Ascending aorta (tissue), 2 donors: ENCODE measurements at regions of chr11 and their contacts with region 1.

Region 1: DNA sequence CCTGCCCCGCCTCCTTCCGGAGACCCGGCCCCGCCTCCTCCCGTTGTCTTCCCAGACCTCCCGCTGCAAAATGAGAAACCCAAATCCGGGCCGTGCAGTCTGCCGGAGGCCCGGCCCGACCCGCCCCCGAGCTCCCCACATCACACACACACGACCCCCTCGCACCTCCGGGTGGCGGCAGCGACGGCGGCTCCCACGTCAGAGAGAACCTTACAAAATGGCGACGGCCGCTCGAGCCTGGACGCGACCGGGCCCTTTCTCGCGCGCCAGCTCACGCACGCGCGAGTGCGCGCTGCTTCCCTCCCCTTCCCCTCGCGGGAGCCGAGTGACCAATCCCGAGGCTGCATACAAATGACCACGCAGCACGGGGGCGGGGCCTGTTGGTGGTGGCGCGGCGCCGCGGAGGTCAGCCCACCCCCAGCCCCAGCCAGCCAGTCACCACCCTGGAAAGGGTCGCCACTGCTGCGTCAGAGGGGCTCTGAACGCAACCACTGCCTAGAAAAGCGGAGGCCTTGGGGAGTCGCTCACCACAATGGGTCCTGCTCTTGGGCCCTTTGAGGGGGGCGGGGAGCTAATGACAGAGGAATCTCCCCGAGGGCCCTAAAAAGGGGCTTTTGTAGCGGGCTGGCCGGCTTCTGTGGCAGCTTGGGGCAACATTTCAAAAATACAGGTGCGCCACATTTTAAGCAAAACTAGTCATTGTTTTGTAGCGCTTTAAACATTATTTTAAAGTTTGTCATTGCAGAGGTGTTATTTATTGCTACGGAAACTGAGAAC is at the start of gene RBM4B:
- DNase-seq: peak; percentile 89 to 99
- H3K4me3 ChIP-seq: peak within 1 kb of the TSS; percentile 79 to 87
- H3K27ac ChIP-seq: peak within 1 kb of the TSS; percentile 94 to 97
- H3K4me1 ChIP-seq: peaks cover 0 to 29% of the 10 kb centered on the region in 2 donors
- H3K27me3 ChIP-seq: no peaks in the 10 kb centered on the region
- CTCF ChIP-seq: no peak
- total RNA-seq, gene RBM4B: 87.0 TPM

Region 2: GRCh38 chr11:66408488-66409214 is 269.1 kb before region 1 on chr11:
- intact Hi-C with region 1: loop called (anchors 2 kb)
- DNase-seq: peak; percentile 81 to 95
- H3K4me3 ChIP-seq: peak overlapping the region; percentile 47 to 67
- H3K27ac ChIP-seq: peak overlapping the region; percentile 73
- H3K4me1 ChIP-seq: peaks cover 11 to 21% of the 10 kb centered on the region in 2 donors
- H3K27me3 ChIP-seq: no peaks in the 10 kb centered on the region
- CTCF ChIP-seq: peak; percentile 99 to 100 (median 100)

Region 3: GRCh38 chr11:66545701-66546367 is 132.0 kb before region 1 on chr11 and contains the start of gene ZDHHC24:
- intact Hi-C with region 1: loop called (anchors 1 kb)
- DNase-seq: peak; percentile 87 to 98
- H3K4me3 ChIP-seq: peak within 1 kb of the TSS; percentile 80 to 92
- H3K27ac ChIP-seq: peak within 1 kb of the TSS; percentile 64
- H3K4me1 ChIP-seq: peaks cover 3 to 20% of the 10 kb centered on the region in 2 donors
- H3K27me3 ChIP-seq: no peaks in the 10 kb centered on the region
- CTCF ChIP-seq: no peak
- total RNA-seq, gene ZDHHC24: 18.0 TPM

Region 4: DNA sequence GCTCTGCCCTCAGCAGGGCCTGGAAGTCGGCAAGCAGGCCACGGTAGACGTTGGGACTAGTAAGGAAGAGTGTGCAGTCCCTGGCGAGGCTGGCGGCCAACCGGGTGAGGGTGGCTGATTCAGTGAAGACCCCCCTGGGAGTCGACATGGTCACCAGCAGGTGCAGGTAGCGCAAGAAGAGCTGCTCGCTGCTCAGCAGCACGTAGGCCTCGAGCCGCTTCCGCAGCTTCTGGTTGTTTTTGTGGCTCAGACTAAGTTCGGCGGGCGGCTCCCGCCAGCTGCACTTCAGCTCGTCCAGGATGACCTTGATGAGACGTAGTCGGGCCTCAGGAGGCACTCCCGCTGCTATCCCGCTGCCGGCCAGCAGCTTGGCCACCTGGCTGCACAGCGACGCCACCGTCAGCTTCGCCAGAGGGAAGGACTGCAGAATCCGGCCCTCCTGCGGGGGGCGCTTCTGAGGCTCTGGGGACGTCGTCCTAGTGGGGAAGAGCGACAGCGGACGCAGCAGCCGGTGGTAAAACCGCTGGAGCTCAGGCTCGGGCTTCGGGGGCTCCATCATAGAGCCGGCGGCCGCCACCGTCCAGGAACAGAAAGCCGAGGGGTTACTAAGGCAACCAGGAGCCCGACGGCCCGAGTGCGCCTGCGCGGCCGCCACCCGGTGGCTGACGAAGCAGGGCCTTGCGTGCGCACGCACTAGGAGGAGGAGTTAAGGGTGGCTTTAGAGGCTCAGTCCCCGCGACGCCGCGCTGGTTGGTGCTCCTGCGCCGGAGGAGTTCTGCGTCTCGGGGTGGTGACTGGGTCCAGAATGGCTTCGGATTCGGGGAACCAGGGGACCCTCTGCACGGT is 85.1 kb before region 1 on chr11 and contains the starts of genes CCDC87 and CCS:
- intact Hi-C with region 1: loop called (anchors 1 kb)
- DNase-seq: peak; percentile 90 to 99
- H3K4me3 ChIP-seq: peak within 1 kb of the TSS; percentile 70 to 82
- H3K27ac ChIP-seq: peak within 1 kb of the TSS; percentile 66 to 69
- H3K4me1 ChIP-seq: peaks cover 5 to 22% of the 10 kb centered on the region in 2 donors
- H3K27me3 ChIP-seq: no peaks in the 10 kb centered on the region
- CTCF ChIP-seq: peak; percentile 74 to 93 (median 76)
- total RNA-seq, gene CCDC87: 0.21 TPM
- total RNA-seq, gene CCS: 50.4 TPM

Region 5: GRCh38 chr11:66638177-66639065 is 39.4 kb before region 1 on chr11 and contains the start of gene RBM4:
- intact Hi-C with region 1: loop called (anchors 1 kb)
- DNase-seq: peak; percentile 96 to 99
- H3K4me3 ChIP-seq: peak within 1 kb of the TSS; percentile 72 to 96
- H3K27ac ChIP-seq: peak within 1 kb of the TSS; percentile 86 to 88
- H3K4me1 ChIP-seq: peaks cover 28 to 36% of the 10 kb centered on the region in 2 donors
- H3K27me3 ChIP-seq: no peaks in the 10 kb centered on the region
- CTCF ChIP-seq: no peak
- total RNA-seq, gene RBM4: 79.5 TPM